ENCODE measurements at regions of chr17 and their contacts with region 1.

Region 1: DNA sequence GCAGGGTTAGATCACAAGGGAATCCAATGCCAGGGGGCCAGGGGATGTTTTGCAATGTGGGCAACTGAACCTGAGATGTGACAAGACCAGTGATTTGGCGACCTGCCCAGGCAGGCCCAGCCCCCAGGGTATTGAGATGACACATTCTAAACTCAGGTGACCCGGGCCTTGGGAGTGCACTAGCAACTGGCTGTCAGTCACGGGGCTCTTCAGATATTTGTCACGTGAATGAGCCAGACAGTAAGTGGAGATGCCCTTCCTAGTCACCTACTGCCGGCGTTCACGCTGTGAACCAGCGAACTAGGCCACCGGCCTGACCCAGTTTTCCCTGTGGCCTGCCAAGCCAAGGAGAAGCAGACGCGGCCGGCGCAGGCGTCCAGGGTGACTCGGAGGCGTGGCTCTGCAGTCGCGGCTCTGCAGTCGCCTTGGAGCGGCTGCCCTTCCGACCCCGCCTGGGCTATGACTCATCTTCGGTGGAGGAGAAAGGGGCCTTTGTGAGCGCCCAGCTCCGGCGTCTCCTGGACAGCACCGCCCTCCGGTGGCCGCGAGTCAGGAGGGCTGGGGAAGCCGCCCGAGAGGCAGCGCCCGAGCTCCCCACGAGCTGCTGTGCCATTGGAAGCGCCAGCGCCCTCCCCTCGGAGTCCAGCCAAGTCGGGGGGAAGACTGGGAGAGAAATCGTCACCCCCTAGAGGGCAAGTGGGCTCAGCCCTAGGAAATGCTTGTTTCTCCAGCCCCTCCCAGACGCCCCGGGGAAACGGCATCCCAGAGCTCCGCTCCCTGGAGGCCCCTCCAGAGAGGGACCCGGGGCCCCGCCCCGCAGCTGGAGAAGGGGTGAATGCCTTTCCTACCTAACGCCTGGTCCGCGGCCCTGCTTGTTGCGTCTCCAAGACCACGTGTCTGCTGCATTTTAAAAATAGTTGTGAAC is 38.8 kb downstream of the WSB1 start:
- DNase-seq: peak; percentile 92
- H3K4me3 ChIP-seq: peak overlapping the region; percentile 45 to 64
- H3K27ac ChIP-seq: peak overlapping the region; percentile 80 to 89
- H3K4me1 ChIP-seq: peaks cover 13 to 16% of the 10 kb centered on the region in 2 experiments; a peak in 2 of 4 replicates
- H3K27me3 ChIP-seq: no peaks in the 10 kb centered on the region
- CTCF ChIP-seq: peak; percentile 88
- EP300 ChIP-seq: peak in 1 of 2 experiments; percentile 14; a peak in 1 of 4 replicates
- RAD21 ChIP-seq: peak; percentile 94

Region 2: GRCh38 chr17:27245230-27245696 is 87.5 kb before region 1 on chr17:
- CTCF ChIA-PET with region 1: interaction called, 125 read pairs
- POLR2A ChIA-PET with region 1: interaction called, 7 read pairs
- DNase-seq: peak; percentile 84
- H3K4me3 ChIP-seq: no peak overlapping the region; a peak in 1 of 4 replicates
- H3K27ac ChIP-seq: no peak overlapping the region
- H3K4me1 ChIP-seq: peaks cover 0 to 12% of the 10 kb centered on the region in 2 experiments; a peak in 1 of 4 replicates
- H3K27me3 ChIP-seq: peaks cover 6% of the 10 kb centered on the region; the same call in 1 of the 2 replicates
- CTCF ChIP-seq: peak; percentile 62
- EP300 ChIP-seq: no peak
- RAD21 ChIP-seq: peak; percentile 94

Region 3: GRCh38 chr17:27293898-27294688 is 38.7 kb before region 1 on chr17 and contains the start of gene WSB1:
- CTCF ChIA-PET with region 1: interaction called, 11 read pairs
- POLR2A ChIA-PET with region 1: interaction called, 18 read pairs
- DNase-seq: peak; percentile 99
- H3K4me3 ChIP-seq: peak within 1 kb of the TSS; percentile 78 to 87
- H3K27ac ChIP-seq: peak within 1 kb of the TSS; percentile 91 to 99
- H3K4me1 ChIP-seq: peaks cover 5 to 12% of the 10 kb centered on the region in 2 experiments; a peak in 3 of 4 replicates
- H3K27me3 ChIP-seq: no peaks in the 10 kb centered on the region
- CTCF ChIP-seq: peak; percentile 13; the same call in 1 of the 2 replicates
- EP300 ChIP-seq: no peak
- RAD21 ChIP-seq: no peak
- polyA plus RNA-seq, gene WSB1: 204 and 261 TPM in 2 replicates

Region 4: DNA sequence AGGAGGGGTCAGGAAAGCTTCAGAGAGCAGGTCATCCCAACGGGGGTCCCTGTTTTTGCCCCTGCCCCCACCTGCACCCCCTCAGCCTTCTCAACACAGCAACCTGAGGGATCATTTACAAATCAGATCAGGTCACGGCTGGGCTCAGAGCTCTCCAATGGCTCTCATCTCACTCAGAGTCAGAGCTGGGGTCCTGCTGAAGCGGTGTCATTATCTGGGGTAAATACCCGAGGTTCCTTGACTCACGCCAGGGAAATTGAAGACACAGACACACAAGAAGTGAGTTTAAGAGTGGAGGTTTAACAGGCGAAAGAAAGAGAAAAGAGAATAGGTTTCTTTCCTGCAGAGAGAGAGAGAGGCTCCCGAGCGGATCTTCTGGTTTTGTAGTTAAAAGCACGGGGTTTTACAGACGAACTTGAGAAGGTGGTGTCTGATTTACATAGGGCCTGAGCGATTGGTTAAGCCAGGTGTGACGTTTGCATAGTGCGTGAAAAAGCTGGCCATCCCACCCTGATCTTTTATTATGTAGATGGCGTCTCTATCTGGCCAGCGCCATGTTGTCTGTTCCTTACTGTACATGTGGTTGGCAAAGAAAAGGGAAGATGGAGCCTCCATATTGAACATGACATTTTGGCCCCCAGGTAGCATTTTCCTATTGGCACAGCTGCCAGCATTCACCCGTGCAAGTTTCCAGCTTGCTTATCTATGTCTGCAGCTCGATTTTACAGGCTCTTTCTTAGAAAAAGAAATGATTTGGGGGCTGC is 12.6 kb after region 1 on chr17:
- CTCF ChIA-PET with region 1: interaction called, 22 read pairs
- POLR2A ChIA-PET with region 1: interaction called, 4 read pairs
- DNase-seq: no peak
- H3K4me3 ChIP-seq: no peak overlapping the region
- H3K27ac ChIP-seq: no peak overlapping the region
- H3K4me1 ChIP-seq: peaks cover 3 to 6% of the 10 kb centered on the region in 2 experiments; a peak in 2 of 4 replicates
- H3K27me3 ChIP-seq: no peaks in the 10 kb centered on the region
- CTCF ChIP-seq: no peak
- EP300 ChIP-seq: no peak
- RAD21 ChIP-seq: no peak

Region 5: GRCh38 chr17:27353461-27354050 is 20.8 kb after region 1 on chr17:
- CTCF ChIA-PET with region 1: interaction called, 12 read pairs
- POLR2A ChIA-PET with region 1: no interaction called
- DNase-seq: peak; percentile 99
- H3K4me3 ChIP-seq: peak overlapping the region; percentile 65 to 82
- H3K27ac ChIP-seq: peak overlapping the region; percentile 83 to 88
- H3K4me1 ChIP-seq: peaks cover 0 to 11% of the 10 kb centered on the region in 2 experiments; a peak in 1 of 4 replicates
- H3K27me3 ChIP-seq: no peaks in the 10 kb centered on the region
- CTCF ChIP-seq: peak; percentile 78
- EP300 ChIP-seq: peak in 1 of 2 experiments; percentile 74; a peak in 1 of 4 replicates
- RAD21 ChIP-seq: peak; percentile 77

Region 6: GRCh38 chr17:27466743-27467375 is 134.1 kb after region 1 on chr17:
- CTCF ChIA-PET with region 1: no interaction called
- POLR2A ChIA-PET with region 1: no interaction called
- DNase-seq: no peak
- H3K4me3 ChIP-seq: no peak overlapping the region
- H3K27ac ChIP-seq: no peak overlapping the region
- H3K4me1 ChIP-seq: peaks cover 4 to 13% of the 10 kb centered on the region in 2 experiments; a peak in 2 of 4 replicates
- H3K27me3 ChIP-seq: no peaks in the 10 kb centered on the region
- CTCF ChIP-seq: no peak
- EP300 ChIP-seq: no peak
- RAD21 ChIP-seq: no peak

Measured in SK-N-SH (cell line).